ENCODE measurements at regions of chr12 and their contacts with region 1.

Region 1: DNA sequence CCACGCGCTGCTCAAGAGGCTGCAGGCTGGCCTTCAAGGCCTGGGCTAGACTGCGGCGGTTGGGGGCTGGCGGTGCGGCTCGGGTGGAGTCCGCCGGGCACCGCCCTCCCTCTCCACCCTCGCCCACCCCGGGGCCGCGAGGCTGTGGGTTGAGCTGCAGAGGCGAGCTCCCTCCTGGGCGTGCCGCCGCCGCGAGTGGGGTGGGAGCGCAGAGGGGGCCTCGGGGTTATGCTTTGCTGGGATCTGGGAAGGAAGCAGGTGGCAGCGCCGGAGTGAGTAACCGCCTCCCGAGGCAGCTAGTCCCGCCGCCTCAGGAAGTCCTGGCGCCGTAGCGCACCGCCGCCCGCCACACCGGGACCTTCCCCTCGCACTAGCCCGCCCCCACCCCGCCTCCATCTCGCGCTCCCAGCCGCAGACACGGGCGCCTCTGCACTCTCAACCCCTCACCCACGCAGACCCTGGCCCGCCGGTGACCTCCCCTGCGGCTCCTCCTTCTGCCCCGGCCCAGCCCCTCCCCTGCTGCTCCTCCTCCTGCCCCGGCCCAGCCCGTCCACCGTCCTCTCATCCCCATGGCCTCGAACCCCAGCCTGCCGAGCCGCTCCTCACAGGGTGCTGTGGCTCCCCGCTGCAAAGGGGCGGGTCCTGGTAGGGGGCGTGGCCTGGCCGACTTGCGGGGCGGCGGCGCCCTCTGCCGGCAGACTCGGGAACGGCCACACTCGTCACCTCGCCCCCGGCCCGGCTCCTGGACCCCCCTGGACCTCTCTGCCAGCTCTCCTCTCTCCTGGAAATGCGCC is 16.6 kb downstream of the TAMALIN start:
- DNase-seq: peak; percentile 60 to 99
- H3K4me3 ChIP-seq: peak overlapping the region; percentile 23 to 71 (median 48)
- H3K27ac ChIP-seq: no peak overlapping the region
- H3K4me1 ChIP-seq: peaks cover 0 to 26% (median 7%) of the 10 kb centered on the region in 4 experiments; a peak in 5 of 7 replicates
- H3K27me3 ChIP-seq: peaks cover 2 to 27% (median 17%) of the 10 kb centered on the region in 4 experiments
- CTCF ChIP-seq: peak; percentile 89 to 95 (median 92)
- EP300 ChIP-seq: no peak; a peak in 1 of 3 replicates
- POLR2A ChIP-seq: no peak
- RAD21 ChIP-seq: peak; percentile 86 to 89

Region 2: GRCh38 chr12:51683726-51684357 is 339.5 kb before region 1 on chr12:
- CTCF ChIA-PET with region 1: no interaction called
- POLR2A ChIA-PET with region 1: no interaction called
- DNase-seq: no peak
- H3K4me3 ChIP-seq: no peak overlapping the region
- H3K27ac ChIP-seq: no peak overlapping the region
- H3K4me1 ChIP-seq: peaks cover 0 to 6% (median 0%) of the 10 kb centered on the region in 4 experiments; a peak in 3 of 7 replicates
- H3K27me3 ChIP-seq: peaks cover 0 to 1% (median 0%) of the 10 kb centered on the region in 4 experiments; a peak in 1 of 7 replicates
- CTCF ChIP-seq: no peak
- EP300 ChIP-seq: no peak
- POLR2A ChIP-seq: no peak
- RAD21 ChIP-seq: no peak

Region 3: GRCh38 chr12:51905471-51906429 is 117.6 kb before region 1 on chr12:
- CTCF ChIA-PET with region 1: interaction called, 10 read pairs
- POLR2A ChIA-PET with region 1: no interaction called
- DNase-seq: no peak
- H3K4me3 ChIP-seq: no peak overlapping the region
- H3K27ac ChIP-seq: no peak overlapping the region
- H3K4me1 ChIP-seq: no peaks in the 10 kb centered on the region
- H3K27me3 ChIP-seq: peaks cover 4 to 25% (median 20%) of the 10 kb centered on the region in 4 experiments
- CTCF ChIP-seq: no peak
- EP300 ChIP-seq: no peak
- POLR2A ChIP-seq: no peak
- RAD21 ChIP-seq: no peak

Region 4: DNA sequence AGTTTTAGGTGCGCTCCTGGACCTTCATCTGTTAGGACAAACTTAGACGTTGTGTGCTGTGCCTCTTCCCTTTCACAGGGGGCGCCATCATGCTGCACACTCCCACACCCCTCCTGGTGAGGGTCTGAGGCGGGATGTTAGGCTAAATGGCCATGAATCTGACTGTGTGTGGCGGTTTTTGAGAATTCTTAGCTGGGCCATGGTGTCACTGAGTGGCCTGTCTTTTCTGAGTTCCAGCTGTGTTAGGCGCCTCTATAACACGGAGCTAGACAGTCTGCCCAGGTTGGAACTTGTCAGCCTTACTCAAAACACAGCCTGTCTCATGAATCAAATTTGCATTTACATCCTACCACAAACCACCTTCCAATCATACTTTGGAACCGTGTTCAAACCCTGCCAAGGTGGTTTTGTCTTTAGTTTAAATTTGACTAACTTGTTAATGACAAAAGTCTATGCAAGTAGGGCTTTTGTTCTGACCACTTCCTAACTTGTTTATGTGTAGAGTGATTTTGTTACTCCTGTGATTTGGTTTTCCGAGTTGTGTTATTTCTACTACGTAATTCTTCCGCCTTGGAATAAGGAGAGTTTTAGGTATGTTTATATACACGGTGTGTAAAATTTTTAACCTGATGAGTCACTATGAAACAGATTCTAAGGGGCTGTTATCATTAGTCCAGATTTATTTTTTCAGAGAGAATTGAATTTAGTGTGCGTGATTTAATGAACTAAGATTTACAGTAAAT is 52.3 kb before region 1 on chr12:
- CTCF ChIA-PET with region 1: interaction called, 55 read pairs
- POLR2A ChIA-PET with region 1: no interaction called
- DNase-seq: peak in 1 of 2 experiments; percentile 62
- H3K4me3 ChIP-seq: no peak overlapping the region
- H3K27ac ChIP-seq: no peak overlapping the region
- H3K4me1 ChIP-seq: peaks cover 3 to 10% (median 6%) of the 10 kb centered on the region in 4 experiments; a peak in 5 of 7 replicates
- H3K27me3 ChIP-seq: no peaks in the 10 kb centered on the region
- CTCF ChIP-seq: peak; percentile 85 to 97 (median 95)
- EP300 ChIP-seq: no peak
- POLR2A ChIP-seq: no peak
- RAD21 ChIP-seq: peak; percentile 34 to 50

Region 5: GRCh38 chr12:51994959-51995358 is 28.4 kb before region 1 on chr12:
- CTCF ChIA-PET with region 1: interaction called, 1,249 read pairs
- POLR2A ChIA-PET with region 1: interaction called, 12 read pairs
- DNase-seq: no peak
- H3K4me3 ChIP-seq: no peak overlapping the region
- H3K27ac ChIP-seq: no peak overlapping the region
- H3K4me1 ChIP-seq: peaks cover 0 to 2% (median under 1%) of the 10 kb centered on the region in 4 experiments; a peak in 3 of 7 replicates
- H3K27me3 ChIP-seq: no peaks in the 10 kb centered on the region
- CTCF ChIP-seq: no peak
- EP300 ChIP-seq: no peak
- POLR2A ChIP-seq: no peak
- RAD21 ChIP-seq: no peak

Region 6: GRCh38 chr12:52010152-52010622 is 13.2 kb before region 1 on chr12:
- CTCF ChIA-PET with region 1: interaction called, 1,249 read pairs
- POLR2A ChIA-PET with region 1: interaction called, 62 read pairs
- DNase-seq: peak; percentile 67 to 79
- H3K4me3 ChIP-seq: peak overlapping the region in 1 of 4 experiments; percentile 32; a peak in 1 of 8 replicates
- H3K27ac ChIP-seq: no peak overlapping the region; the same call in 1 of the 2 replicates
- H3K4me1 ChIP-seq: peaks cover 5 to 45% (median 24%) of the 10 kb centered on the region in 4 experiments
- H3K27me3 ChIP-seq: peaks cover 18 to 64% (median 56%) of the 10 kb centered on the region in 4 experiments
- CTCF ChIP-seq: no peak
- EP300 ChIP-seq: no peak; a peak in 1 of 3 replicates
- POLR2A ChIP-seq: peak in 1 of 2 experiments; percentile 47; a peak in 1 of 3 replicates
- RAD21 ChIP-seq: no peak

Region 7: DNA sequence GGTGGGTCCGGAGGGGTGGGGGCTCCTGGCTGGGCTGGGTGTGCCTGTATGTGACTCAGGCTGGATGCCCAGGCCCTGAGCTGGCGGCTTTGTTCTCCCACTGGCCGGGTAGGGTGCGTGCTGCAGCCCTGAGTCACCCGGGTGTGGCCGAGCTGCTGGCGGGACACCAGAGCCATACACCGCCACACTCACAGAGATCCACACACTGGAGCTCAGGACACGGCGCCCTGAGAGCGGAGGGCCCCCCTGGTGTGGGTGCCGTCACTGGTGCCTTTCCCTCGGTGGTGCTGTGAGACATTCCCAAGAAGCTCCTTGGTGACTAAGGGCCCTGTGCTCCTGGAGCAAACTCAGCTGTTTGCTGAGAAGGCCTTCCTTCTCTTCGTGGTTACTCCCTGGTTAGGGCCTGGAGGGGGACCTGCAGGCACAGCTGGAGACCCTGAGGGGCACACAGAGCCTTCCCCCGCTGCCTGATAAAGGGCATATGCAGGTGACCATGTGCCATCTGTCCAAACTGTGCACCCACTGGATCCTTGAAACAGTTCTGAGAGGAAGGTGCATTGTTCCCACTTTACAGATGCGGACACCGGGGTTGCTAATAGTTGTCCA is 124.1 kb after region 1 on chr12:
- CTCF ChIA-PET with region 1: interaction called, 10 read pairs
- POLR2A ChIA-PET with region 1: no interaction called
- DNase-seq: no peak
- H3K4me3 ChIP-seq: no peak overlapping the region
- H3K27ac ChIP-seq: peak overlapping the region; percentile 73
- H3K4me1 ChIP-seq: peaks cover 8 to 44% (median 19%) of the 10 kb centered on the region in 4 experiments
- H3K27me3 ChIP-seq: no peaks in the 10 kb centered on the region; a peak in 1 of 7 replicates
- CTCF ChIP-seq: no peak
- EP300 ChIP-seq: no peak
- POLR2A ChIP-seq: no peak
- RAD21 ChIP-seq: no peak

Measured in H1 (cell line).